ENCODE measurements at regions of chr9 and their contacts with region 1.

Region 1: GRCh38 chr9:126317513-126317912 is 9.1 kb upstream of the MVB12B start:
- DNase-seq: no peak
- ATAC-seq: peak; percentile 72 to 77
- H3K4me3 ChIP-seq: no peak overlapping the region
- H3K27ac ChIP-seq: no peak overlapping the region
- H3K4me1 ChIP-seq: no peaks in the 10 kb centered on the region
- H3K27me3 ChIP-seq: no peaks in the 10 kb centered on the region
- CTCF ChIP-seq: peak; percentile 50

Region 2: DNA sequence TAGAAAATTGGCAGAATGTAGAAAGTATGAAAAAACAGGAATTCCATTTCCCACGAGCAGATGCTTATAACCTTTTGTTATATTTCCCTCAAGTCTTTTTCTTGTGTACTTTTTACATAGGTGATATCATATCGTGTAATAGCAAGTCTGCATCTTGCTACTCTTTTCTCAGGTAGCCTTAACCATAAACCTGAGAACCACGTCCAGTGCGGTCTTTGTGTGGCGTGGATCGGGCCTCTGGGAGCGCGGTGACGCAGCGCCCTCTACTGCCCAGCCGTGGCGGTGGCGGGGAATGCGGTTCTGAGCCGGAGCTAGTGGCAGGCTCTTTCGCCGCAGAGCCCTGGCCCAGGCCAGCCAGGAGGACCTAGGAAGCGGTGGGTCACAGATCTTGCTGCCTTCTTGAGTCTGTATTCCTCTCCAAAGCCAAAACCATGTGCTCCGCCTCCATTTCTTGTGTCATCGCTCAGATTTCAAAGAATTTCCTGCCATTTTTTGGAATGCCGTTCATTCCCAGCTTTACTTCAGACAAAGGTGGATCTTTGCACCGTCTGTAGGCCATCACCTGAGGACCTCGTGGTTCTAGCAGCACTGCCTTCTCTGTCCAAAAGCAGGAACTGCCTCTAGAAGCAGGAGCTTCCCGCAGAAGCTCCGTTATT is 81.0 kb after region 1 on chr9:
- intact Hi-C with region 1: loop called (anchors 5 kb)
- DNase-seq: peak; percentile 87
- ATAC-seq: peak; percentile 90 to 91
- H3K4me3 ChIP-seq: no peak overlapping the region
- H3K27ac ChIP-seq: no peak overlapping the region
- H3K4me1 ChIP-seq: peaks cover 45% of the 10 kb centered on the region
- H3K27me3 ChIP-seq: no peaks in the 10 kb centered on the region
- CTCF ChIP-seq: peak; percentile 99

Region 3: GRCh38 chr9:126490871-126491567 is 173.5 kb after region 1 on chr9:
- intact Hi-C with region 1: loop called (anchors 10 kb)
- DNase-seq: no peak
- ATAC-seq: peak; percentile 66 to 78
- H3K4me3 ChIP-seq: no peak overlapping the region
- H3K27ac ChIP-seq: no peak overlapping the region
- H3K4me1 ChIP-seq: peaks cover 7% of the 10 kb centered on the region
- H3K27me3 ChIP-seq: no peaks in the 10 kb centered on the region
- CTCF ChIP-seq: peak; percentile 92

Region 4: GRCh38 chr9:126806336-126806735 is 488.8 kb after region 1 on chr9:
- intact Hi-C with region 1: no loop called
- DNase-seq: no peak
- ATAC-seq: peak in 1 of 2 donors; percentile 42
- H3K4me3 ChIP-seq: peak overlapping the region; percentile 95
- H3K27ac ChIP-seq: peak overlapping the region; percentile 92
- H3K4me1 ChIP-seq: peaks cover 40% of the 10 kb centered on the region
- H3K27me3 ChIP-seq: no peaks in the 10 kb centered on the region
- CTCF ChIP-seq: no peak

Region 5: DNA sequence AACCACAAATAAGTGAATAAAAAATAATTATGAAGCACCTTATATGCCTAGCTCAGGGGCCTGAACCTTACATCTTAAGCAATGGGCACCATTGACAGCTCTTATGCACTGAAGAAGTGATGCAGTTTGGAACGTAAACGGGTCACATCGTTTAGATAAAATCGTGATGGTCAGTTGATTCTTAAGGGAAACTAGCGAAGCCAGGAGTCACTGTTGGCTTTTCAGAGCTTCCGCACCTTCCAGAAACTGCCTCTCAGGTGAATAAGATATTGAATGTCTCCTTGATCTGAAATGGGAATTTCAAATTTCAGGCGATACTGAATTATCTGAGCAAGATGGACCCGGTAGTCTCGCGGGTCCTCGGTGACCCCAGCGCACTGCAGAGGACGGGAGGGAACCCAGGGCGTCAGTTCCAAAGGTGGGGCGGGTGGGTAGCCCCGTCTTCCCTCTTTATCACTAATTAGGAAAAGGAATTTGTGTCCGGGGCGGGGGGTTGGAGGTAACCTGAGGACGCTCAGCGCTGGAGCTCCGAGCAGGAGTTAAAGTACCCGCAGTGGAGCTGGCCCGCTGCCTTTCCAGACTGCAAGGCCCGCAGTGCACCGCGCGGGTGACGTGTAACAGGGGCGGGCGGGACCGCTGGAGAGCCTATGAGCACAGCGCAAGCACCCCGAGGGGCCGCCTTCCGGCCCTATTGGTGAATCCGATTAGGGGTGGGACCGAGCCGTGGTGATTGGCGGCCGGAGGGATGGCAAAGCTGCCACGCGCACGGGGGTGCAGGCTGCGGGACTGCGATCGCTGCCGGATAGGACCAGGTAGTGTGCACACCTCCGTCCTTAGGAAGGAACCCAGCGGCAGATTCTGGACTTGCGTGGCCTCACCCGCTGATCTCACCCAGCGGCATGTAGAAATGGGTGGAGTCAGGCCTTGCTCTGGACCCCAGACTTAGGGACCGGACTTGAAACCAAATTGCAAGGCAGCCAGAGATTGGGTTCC is 927.4 kb after region 1 on chr9:
- intact Hi-C with region 1: no loop called
- DNase-seq: peak; percentile 99
- ATAC-seq: peak; percentile 100
- H3K4me3 ChIP-seq: peak overlapping the region; percentile 61
- H3K27ac ChIP-seq: peak overlapping the region; percentile 77
- H3K4me1 ChIP-seq: peaks cover 4% of the 10 kb centered on the region
- H3K27me3 ChIP-seq: no peaks in the 10 kb centered on the region
- CTCF ChIP-seq: no peak

Measured in lower lobe of right lung (tissue), 2 donors.